ENCODE measurements at regions of chr6 and their contacts with region 1.

Region 1: GRCh38 chr6:26097268-26097875 is 10.1 kb downstream of the HFE start:
- DNase-seq: no peak
- H3K4me3 ChIP-seq: no peak overlapping the region
- H3K27ac ChIP-seq: no peak overlapping the region
- H3K27me3 ChIP-seq: no peaks in the 10 kb centered on the region
- CTCF ChIP-seq: peak; percentile 69

Region 2: GRCh38 chr6:26031595-26032339 is 65.6 kb before region 1 on chr6:
- CTCF ChIA-PET with region 1: interaction called, 22 read pairs
- POLR2A ChIA-PET with region 1: no interaction called
- DNase-seq: peak; percentile 87
- H3K4me3 ChIP-seq: peak overlapping the region; percentile 68
- H3K27ac ChIP-seq: peak overlapping the region; percentile 92
- H3K27me3 ChIP-seq: no peaks in the 10 kb centered on the region
- CTCF ChIP-seq: peak; percentile 33

Region 3: GRCh38 chr6:26045065-26045927 is 52.1 kb before region 1 on chr6:
- CTCF ChIA-PET with region 1: interaction called, 21 read pairs
- POLR2A ChIA-PET with region 1: no interaction called
- DNase-seq: peak; percentile 82
- H3K4me3 ChIP-seq: peak overlapping the region; percentile 66
- H3K27ac ChIP-seq: peak overlapping the region; percentile 63
- H3K27me3 ChIP-seq: no peaks in the 10 kb centered on the region
- CTCF ChIP-seq: peak; percentile 19; the same call in 1 of the 2 replicates

Region 4: DNA sequence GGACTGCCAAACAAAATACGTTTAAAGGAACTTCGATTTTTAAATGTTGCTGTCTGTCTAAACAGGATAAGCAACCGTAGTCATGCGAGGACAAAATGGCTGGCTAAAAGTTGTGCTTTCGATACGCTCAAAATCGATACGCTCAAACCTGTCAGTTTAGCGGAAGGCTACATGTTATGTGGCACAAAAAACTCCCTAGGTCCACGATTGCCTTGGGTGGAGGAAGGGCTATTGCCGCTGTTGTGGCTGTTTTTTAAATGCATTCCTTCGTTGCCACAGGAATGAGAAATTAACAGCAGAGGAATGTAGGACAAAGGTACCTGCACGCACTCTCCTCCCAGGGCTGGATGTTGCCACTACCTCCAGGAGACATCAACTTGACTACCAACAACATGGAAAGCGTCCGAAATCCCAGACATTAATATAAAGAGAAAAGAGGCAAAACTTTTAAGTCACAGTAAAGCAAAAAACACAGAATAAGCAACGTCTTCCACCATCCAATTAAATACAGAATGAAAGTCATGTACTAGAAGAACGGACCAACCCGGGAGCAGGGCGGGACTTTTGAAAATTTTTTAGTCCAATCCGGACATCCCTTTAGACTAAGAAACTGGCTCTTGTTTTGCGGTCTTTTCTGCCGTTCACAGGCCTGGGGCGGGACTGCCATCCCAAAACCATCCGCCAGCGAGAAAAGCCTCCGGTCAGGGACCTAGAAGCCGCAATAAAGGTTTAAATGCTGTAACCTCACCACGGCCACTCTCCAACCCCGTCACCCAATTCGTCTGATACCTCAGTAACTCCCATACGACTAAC is 42.3 kb before region 1 on chr6:
- CTCF ChIA-PET with region 1: interaction called, 858 read pairs
- POLR2A ChIA-PET with region 1: no interaction called
- DNase-seq: peak; percentile 89
- H3K4me3 ChIP-seq: peak overlapping the region; percentile 77
- H3K27ac ChIP-seq: peak overlapping the region; percentile 90
- H3K27me3 ChIP-seq: no peaks in the 10 kb centered on the region
- CTCF ChIP-seq: no peak